GM10248 (cell line): ENCODE measurements at regions of chr15 and their contacts with region 1.

Region 1: GRCh38 chr15:81480645-81481053 is 106.6 kb upstream of the TMC3 start:
- DNase-seq: peak; percentile 20
- CTCF ChIP-seq: peak; percentile 68

Region 2: DNA sequence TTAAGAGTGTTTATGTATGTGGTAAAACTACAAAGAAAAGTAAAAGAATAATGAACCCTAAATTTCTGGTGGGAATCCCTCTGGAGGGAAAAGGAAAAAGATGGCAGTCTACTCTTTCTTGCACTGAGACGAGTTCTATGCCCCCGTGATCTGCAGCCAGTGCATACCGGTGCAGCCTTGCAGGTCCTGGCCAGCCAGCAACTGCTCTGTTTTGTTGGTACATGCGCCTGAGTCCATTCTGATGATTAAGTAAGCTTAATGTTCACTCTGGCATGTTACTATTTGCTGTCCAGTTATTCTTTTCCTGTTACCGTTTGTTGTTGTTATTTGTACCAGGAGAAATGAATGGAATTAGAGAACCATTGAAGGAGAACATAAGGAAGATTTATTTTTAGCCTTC is 11.5 kb before region 1 on chr15:
- CTCF ChIA-PET with region 1: interaction called, 14 read pairs
- POLR2A ChIA-PET with region 1: no interaction called
- DNase-seq: no peak
- CTCF ChIP-seq: no peak

Region 3: GRCh38 chr15:81492331-81492963 is 11.8 kb after region 1 on chr15:
- CTCF ChIA-PET with region 1: interaction called, 15 read pairs
- POLR2A ChIA-PET with region 1: interaction called, 3 read pairs
- DNase-seq: no peak
- CTCF ChIP-seq: no peak